ENCODE measurements at regions of chr2 and their contacts with region 1.

Region 1: GRCh38 chr2:28392297-28393113 is at the start of gene FOSL2:
- DNase-seq: peak; percentile 94 to 99
- H3K4me3 ChIP-seq: peak within 1 kb of the TSS; percentile 81 to 96
- H3K27ac ChIP-seq: peak within 1 kb of the TSS; percentile 99 to 100
- H3K4me1 ChIP-seq: peaks cover 0 to 12% of the 10 kb centered on the region in 2 donors
- H3K27me3 ChIP-seq: no peaks in the 10 kb centered on the region
- CTCF ChIP-seq: no peak
- total RNA-seq, gene FOSL2: 185 TPM

Region 2: GRCh38 chr2:27723372-27724144 is 668.9 kb before region 1 on chr2:
- intact Hi-C with region 1: loop called (anchors 5 kb)
- DNase-seq: peak in 1 of 2 donors; percentile 90
- H3K4me3 ChIP-seq: no peak overlapping the region
- H3K27ac ChIP-seq: peak overlapping the region; percentile 87 to 95
- H3K4me1 ChIP-seq: peaks cover 24 to 45% of the 10 kb centered on the region in 2 donors
- H3K27me3 ChIP-seq: no peaks in the 10 kb centered on the region
- CTCF ChIP-seq: peak; percentile 84 to 97 (median 90)

Region 3: GRCh38 chr2:27890146-27890923 is 502.2 kb before region 1 on chr2 and contains the starts of genes BABAM2 and RBKS:
- intact Hi-C with region 1: loop called (anchors 1 kb)
- DNase-seq: peak; percentile 75 to 91
- H3K4me3 ChIP-seq: peak within 1 kb of the TSS; percentile 69 to 72
- H3K27ac ChIP-seq: peak within 1 kb of the TSS; percentile 90 to 95
- H3K4me1 ChIP-seq: peaks cover 0 to 21% of the 10 kb centered on the region in 2 donors
- H3K27me3 ChIP-seq: no peaks in the 10 kb centered on the region
- CTCF ChIP-seq: no peak
- total RNA-seq, gene BABAM2: 19.6 TPM
- total RNA-seq, gene RBKS: not detected

Region 4: GRCh38 chr2:28102455-28102874 is 290.0 kb before region 1 on chr2:
- intact Hi-C with region 1: loop called (anchors 2 kb)
- DNase-seq: no peak
- H3K4me3 ChIP-seq: peak overlapping the region; percentile 5 to 18
- H3K27ac ChIP-seq: peak overlapping the region; percentile 74 to 75
- H3K4me1 ChIP-seq: peaks cover 3 to 34% of the 10 kb centered on the region in 2 donors
- H3K27me3 ChIP-seq: no peaks in the 10 kb centered on the region
- CTCF ChIP-seq: no peak

Region 5: GRCh38 chr2:28286678-28287077 is 105.8 kb before region 1 on chr2:
- intact Hi-C with region 1: loop called (anchors 2 kb)
- DNase-seq: no peak
- H3K4me3 ChIP-seq: no peak overlapping the region
- H3K27ac ChIP-seq: peak overlapping the region; percentile 87 to 92
- H3K4me1 ChIP-seq: peaks cover 8 to 17% of the 10 kb centered on the region in 2 donors
- H3K27me3 ChIP-seq: no peaks in the 10 kb centered on the region
- CTCF ChIP-seq: no peak

Region 6: DNA sequence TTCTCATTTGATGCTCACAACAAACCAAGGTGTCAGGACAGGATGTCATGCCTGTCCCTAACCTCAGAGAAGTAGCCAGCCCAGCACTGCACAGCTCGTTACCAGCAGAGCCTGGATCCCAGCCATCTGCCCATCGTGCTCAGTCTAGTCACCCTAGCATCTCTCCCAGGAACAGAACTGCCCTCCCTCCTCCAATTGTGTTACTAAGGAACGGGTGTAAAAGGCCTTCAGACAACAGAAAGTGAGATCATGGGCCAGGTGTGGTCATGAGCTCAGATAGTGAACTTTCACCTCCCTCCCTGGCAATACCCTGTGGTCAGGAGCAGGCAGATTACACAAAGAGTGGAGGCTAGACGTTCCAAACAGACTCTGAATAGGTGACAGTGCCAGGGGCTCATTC is 247.3 kb after region 1 on chr2:
- intact Hi-C with region 1: loop called (anchors 10 kb)
- DNase-seq: no peak
- H3K4me3 ChIP-seq: no peak overlapping the region
- H3K27ac ChIP-seq: peak overlapping the region; percentile 94 to 98
- H3K4me1 ChIP-seq: peaks cover 30 to 49% of the 10 kb centered on the region in 2 donors
- H3K27me3 ChIP-seq: no peaks in the 10 kb centered on the region
- CTCF ChIP-seq: no peak

Measured in ascending aorta (tissue), 2 donors.